G401 (cell line): ENCODE measurements at regions of chr10 and their contacts with region 1.

Region 1: GRCh38 chr10:110007701-110008517 is at the start of gene ADD3:
- DNase-seq: peak; percentile 97
- total RNA-seq, gene ADD3: 58.2 and 69.6 TPM in 2 replicates

Region 2: GRCh38 chr10:109883859-109884771 is 123.8 kb before region 1 on chr10:
- in situ Hi-C with region 1: loop called (anchors 25 kb)
- DNase-seq: peak; percentile 93